ENCODE measurements at regions of chr10 and their contacts with region 1.

Region 1: GRCh38 chr10:24784923-24785322 is 61.2 kb upstream of the ARHGAP21 start:
- DNase-seq: no peak
- H3K4me3 ChIP-seq: no peak overlapping the region
- CTCF ChIP-seq: no peak

Region 2: DNA sequence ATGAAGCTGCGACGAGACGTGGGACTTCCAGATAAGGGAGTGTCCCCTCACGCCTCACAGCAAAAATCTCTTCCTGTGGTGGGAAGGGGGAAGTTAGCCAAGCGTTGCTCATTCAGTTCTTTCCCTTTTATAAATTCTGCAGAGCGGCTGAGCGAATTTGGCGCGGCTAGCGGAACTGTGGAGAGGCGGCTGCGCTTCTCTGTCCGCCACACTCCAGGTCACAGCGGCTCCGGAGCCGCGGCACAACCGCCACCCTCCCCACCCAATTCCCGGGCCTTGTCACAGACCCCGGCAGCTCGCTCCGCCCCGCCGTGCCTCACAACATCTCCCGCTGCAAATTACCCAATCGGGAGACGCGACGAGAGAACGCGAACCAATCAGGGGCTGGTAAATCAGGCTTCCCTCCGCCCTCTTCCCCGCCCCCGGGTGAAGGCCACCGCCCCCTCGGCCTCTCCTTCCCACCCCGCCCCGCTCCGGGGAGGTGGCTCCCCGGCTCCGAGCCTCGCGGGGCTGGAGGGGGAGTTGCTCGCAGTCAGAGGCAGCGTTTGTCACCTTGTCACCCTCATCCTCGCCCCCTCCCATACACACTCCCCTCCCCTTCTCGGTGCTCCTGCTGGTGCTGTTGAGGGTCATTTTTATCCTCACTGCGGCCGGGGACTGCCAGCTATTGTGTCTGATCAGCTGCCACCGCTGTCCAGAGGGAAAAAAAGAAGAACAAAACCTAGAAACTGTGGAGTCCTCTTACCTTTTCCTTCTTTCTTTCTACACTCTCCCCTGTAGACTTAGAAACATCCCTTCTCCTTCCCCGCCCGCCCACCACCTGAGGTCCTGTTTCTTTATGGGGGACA is 60.3 kb before region 1 on chr10:
- in situ Hi-C with region 1: loop called (anchors 5 kb)
- DNase-seq: peak; percentile 93
- H3K4me3 ChIP-seq: peak overlapping the region; percentile 69
- CTCF ChIP-seq: no peak

Region 3: DNA sequence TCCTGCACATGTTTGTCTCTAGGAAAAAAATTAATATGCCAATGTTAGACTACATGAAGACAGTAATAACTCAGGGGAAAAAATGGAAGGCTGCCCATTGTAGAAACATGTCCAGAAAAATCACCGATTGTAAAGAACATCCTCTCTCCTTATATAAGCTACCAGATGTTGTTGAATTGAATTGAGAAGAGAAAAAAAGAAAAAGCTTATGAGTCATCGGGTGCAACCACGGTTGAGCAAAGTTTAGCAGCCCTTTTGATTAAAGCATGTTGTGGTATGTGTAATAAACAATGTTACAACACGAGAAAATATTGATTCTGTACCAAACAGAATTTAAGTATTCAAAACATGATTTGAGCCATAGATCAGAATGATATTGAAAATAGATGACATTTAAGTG is 41.1 kb after region 1 on chr10:
- in situ Hi-C with region 1: no loop called
- DNase-seq: peak; percentile 53
- H3K4me3 ChIP-seq: no peak overlapping the region
- CTCF ChIP-seq: no peak